ENCODE measurements at regions of chr1 and their contacts with region 1.

Region 1: GRCh38 chr1:109643385-109644230 is 12.3 kb upstream of the GSTM4 start:
- DNase-seq: peak; percentile 88
- H3K4me3 Mint-ChIP-seq: no peak overlapping the region
- H3K27ac Mint-ChIP-seq: no peak overlapping the region
- H3K4me1 Mint-ChIP-seq: peaks cover 18% of the 10 kb centered on the region
- H3K27me3 Mint-ChIP-seq: peaks cover 7% of the 10 kb centered on the region

Region 2: DNA sequence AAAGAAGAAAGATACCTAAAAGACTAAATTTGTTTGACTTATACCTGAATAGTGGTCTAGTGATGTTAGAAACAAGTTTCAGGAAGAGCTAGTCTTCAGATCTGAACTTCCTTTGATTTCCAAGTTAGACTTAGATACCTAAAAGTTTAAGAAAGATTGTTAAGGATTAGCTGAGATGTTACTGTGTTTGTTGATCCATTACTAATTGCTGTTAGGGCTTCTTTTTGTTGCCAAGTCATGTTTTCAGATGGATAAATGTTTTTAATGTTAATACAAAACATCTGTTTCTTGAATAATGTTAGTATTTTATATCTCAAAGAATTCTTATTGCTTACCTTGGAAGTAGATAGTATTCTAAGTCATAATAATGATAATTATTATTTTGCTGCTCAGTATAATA is 83.6 kb before region 1 on chr1:
- CTCF ChIA-PET with region 1: interaction called, 17 read pairs
- POLR2A ChIA-PET with region 1: no interaction called
- DNase-seq: no peak
- H3K4me3 Mint-ChIP-seq: no peak overlapping the region
- H3K27ac Mint-ChIP-seq: no peak overlapping the region
- H3K4me1 Mint-ChIP-seq: peaks cover 33% of the 10 kb centered on the region
- H3K27me3 Mint-ChIP-seq: no peaks in the 10 kb centered on the region

Region 3: DNA sequence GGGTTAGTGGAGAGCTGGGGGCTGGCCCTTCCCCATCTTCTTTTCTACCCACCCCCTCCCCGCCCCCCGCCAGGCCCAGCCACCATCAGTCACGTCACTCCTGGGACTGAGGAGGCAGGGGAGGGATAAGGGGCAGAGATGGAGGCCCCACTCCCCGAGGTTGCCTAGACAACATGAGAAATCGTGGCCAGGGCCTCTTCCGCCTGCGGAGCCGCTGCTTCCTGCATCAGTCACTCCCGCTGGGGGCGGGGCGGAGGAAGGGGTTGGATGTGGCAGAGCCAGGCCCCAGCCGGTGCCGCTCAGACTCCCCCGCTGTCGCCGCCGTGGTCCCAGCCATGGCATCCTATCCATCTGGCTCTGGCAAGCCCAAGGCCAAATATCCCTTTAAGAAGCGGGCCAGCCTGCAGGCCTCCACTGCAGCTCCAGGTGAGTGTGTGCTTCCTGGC is 22.7 kb before region 1 on chr1:
- CTCF ChIA-PET with region 1: interaction called, 14 read pairs
- POLR2A ChIA-PET with region 1: interaction called, 12 read pairs
- DNase-seq: peak; percentile 97
- H3K4me3 Mint-ChIP-seq: peak overlapping the region; percentile 97
- H3K27ac Mint-ChIP-seq: peak overlapping the region; percentile 93
- H3K4me1 Mint-ChIP-seq: peaks cover 77% of the 10 kb centered on the region
- H3K27me3 Mint-ChIP-seq: no peaks in the 10 kb centered on the region

Region 4: DNA sequence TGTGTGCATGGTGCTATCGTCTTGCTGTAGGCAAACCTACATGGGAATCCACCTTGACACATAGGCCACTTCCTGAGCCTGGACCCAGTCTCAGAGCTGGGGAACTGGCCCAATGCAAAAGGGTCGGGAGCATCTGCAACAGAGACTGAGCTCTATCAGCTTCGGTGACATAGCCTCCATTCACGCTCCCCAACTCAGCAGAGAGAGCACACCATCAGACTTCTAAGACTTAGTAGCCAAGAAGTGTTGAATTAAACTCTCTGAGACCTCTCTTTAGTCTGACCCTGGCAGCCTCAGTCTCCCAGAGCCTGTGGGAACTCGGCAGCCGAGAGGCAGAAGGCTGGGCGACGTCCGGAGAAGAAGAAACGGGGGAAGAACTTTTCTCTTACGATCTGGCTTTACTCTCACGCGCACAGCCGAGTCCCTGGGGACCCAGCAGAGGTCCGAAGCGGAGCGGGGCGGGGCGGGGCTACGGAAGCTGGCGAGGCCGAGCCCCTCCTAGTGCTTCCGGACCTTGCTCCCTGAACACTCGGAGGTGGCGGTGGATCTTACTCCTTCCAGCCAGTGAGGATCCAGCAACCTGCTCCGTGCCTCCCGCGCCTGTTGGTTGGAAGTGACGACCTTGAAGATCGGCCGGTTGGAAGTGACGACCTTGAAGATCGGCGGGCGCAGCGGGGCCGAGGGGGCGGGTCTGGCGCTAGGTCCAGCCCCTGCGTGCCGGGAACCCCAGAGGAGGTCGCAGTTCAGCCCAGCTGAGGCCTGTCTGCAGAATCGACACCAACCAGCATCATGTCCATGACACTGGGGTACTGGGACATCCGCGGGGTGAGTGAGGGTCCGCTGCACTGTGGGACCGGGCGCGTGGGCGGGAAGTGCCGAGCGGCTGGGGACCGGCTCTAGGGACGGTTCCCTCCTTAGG is 12.3 kb after region 1 on chr1 and contains the start of gene GSTM4:
- CTCF ChIA-PET with region 1: interaction called, 61 read pairs
- POLR2A ChIA-PET with region 1: no interaction called
- DNase-seq: peak; percentile 71
- H3K4me3 Mint-ChIP-seq: peak within 1 kb of the TSS; percentile 77
- H3K27ac Mint-ChIP-seq: peak within 1 kb of the TSS; percentile 60
- H3K4me1 Mint-ChIP-seq: peaks cover 21% of the 10 kb centered on the region
- H3K27me3 Mint-ChIP-seq: peaks cover 35% of the 10 kb centered on the region
- total RNA-seq, gene GSTM4: 10.4 to 14.3 TPM

Region 5: GRCh38 chr1:110011527-110012041 is 368.0 kb after region 1 on chr1:
- CTCF ChIA-PET with region 1: interaction called, 30 read pairs
- POLR2A ChIA-PET with region 1: no interaction called
- DNase-seq: peak; percentile 45
- H3K4me3 Mint-ChIP-seq: no peak overlapping the region
- H3K27ac Mint-ChIP-seq: peak overlapping the region; percentile 41
- H3K4me1 Mint-ChIP-seq: peaks cover 5% of the 10 kb centered on the region
- H3K27me3 Mint-ChIP-seq: no peaks in the 10 kb centered on the region